T-cell (primary cell): ENCODE measurements at regions of chr6 and their contacts with region 1.

Region 1: DNA sequence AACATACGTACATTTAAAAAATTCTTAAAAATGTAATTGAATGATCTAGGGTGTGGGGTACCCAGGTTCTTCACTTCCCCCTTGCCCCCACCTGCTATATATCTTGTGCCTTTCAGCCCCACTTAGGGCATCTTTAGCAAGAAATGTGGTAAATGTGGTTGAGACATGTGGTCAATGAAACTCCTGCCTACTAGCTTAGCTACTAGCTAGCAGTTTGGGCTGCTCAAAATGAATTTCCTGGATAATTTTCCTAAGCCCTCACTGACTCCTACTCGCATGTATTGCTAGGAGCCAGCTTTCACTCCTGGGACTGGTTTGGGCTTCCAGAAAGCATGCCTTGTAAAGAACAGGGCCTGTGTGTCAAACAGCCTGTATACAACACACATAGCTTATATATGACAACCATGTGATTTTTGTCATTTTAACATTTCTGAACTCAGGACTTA is 257.3 kb downstream of the ATXN1 start:
- DNase-seq: peak in 1 of 35 experiments; percentile 63
- ATAC-seq: peak; percentile 54 to 68 (median 64)
- H3K4me3 ChIP-seq: no peak overlapping the region
- H3K4me3 Mint-ChIP-seq: no peak overlapping the region
- H3K27ac ChIP-seq: no peak overlapping the region
- H3K27ac Mint-ChIP-seq: no peak overlapping the region
- H3K4me1 ChIP-seq: peaks cover 12 to 15% of the 10 kb centered on the region in 2 experiments
- H3K4me1 Mint-ChIP-seq: peaks cover 25 to 33% (median 28%) of the 10 kb centered on the region in 3 donors
- H3K27me3 ChIP-seq: no peaks in the 10 kb centered on the region
- H3K27me3 Mint-ChIP-seq: no peaks in the 10 kb centered on the region

Region 2: DNA sequence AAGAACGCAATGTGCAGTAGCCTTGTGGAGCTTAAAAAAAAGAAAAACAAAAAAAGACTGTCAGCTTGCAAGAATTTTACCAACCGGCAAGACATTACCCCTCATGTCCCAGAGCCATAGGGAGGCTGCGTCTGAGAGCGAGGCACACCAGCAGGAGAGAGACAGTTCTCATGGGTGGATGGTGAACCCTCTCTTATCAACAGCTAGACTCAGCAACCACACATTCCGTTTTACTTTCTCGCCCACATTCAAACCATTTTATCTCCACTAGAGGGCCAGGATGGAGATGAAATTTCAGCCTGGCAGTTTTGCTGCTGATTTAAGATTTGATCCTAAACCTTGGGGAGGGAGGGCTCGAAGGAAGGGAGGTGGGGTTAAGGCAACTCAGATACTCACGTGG is 10.3 kb after region 1 on chr6:
- CTCF ChIA-PET with region 1: interaction called, 3 to 11 read pairs
- POLR2A ChIA-PET with region 1: no interaction called
- DNase-seq: peak in 13 of 35 experiments; percentile 3 to 66 (median 15)
- ATAC-seq: peak; percentile 32 to 50 (median 40)
- H3K4me3 ChIP-seq: no peak overlapping the region
- H3K4me3 Mint-ChIP-seq: peak overlapping the region in 1 of 3 donors; percentile 46
- H3K27ac ChIP-seq: no peak overlapping the region
- H3K27ac Mint-ChIP-seq: peak overlapping the region; percentile 37 to 60
- H3K4me1 ChIP-seq: peaks cover 29 to 38% of the 10 kb centered on the region in 2 experiments
- H3K4me1 Mint-ChIP-seq: peaks cover 60 to 69% (median 68%) of the 10 kb centered on the region in 3 donors
- H3K27me3 ChIP-seq: no peaks in the 10 kb centered on the region
- H3K27me3 Mint-ChIP-seq: no peaks in the 10 kb centered on the region